Astrocyte of the cerebellum (primary cell): ENCODE measurements at regions of chr16 and their contacts with region 1.

Region 1: DNA sequence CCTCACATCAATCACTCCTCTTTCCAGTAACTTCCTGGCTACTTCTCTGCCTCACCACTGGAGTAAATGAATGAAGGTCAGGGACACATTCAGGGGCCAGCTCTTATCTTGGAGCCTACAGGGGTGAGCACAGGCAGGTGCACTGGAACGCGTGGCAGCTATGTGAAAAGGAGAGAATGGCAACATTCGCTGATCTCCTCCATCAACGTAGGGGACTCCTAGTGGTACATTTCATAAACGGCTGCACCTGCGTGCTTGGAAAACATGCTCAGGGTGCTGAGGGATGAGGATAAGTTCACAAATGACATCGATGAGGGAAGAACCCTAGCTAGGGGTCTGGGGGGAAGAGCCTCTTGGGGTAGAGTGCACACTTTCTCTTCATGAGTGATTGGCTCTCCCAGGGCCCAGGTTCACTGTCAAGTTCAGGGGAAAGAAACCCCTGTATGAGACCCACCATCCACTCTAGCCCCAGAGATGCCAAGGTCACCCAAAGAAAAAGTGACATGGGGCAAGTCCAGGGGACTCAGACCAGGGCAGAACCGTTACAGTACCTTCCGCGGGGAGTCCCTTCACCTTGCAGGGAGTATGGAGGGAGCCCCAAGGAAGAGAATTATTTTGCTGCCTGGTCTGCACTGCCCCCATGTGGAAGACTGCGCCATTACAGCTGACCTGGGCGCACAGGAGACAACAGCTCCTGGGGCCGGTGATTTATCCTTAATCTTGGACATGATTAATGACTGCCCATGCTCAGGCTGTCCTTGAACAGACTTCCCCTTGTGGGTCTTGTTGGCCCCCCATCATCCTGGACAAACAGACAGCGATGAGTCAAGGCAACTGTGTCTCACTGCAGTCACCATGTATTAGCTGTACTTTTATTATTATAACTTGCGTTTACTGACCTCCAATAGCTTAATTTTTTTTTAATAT is 30.1 kb downstream of the VAC14 start:
- DNase-seq: no peak
- H3K4me3 ChIP-seq: no peak overlapping the region
- CTCF ChIP-seq: peak; percentile 95

Region 2: GRCh38 chr16:70529051-70529777 is 241.7 kb before region 1 on chr16:
- in situ Hi-C with region 1: loop called (anchors 25 kb)
- DNase-seq: peak; percentile 49
- H3K4me3 ChIP-seq: no peak overlapping the region
- CTCF ChIP-seq: peak; percentile 37